CD8-positive, alpha-beta memory T cell (primary cell): ENCODE measurements at regions of chr10 and their contacts with region 1.

Region 1: GRCh38 chr10:86693721-86694369 is 25.5 kb downstream of the LDB3 start:
- DNase-seq: peak in 3 of 5 donors; percentile 10 to 58 (median 18)
- H3K4me3 ChIP-seq: no peak overlapping the region
- H3K4me3 Mint-ChIP-seq: no peak overlapping the region
- H3K27ac ChIP-seq: no peak overlapping the region
- H3K27ac Mint-ChIP-seq: no peak overlapping the region
- H3K4me1 ChIP-seq: no peaks in the 10 kb centered on the region
- H3K4me1 Mint-ChIP-seq: peaks cover under 1 to 3% (median 1%) of the 10 kb centered on the region in 3 donors
- H3K27me3 ChIP-seq: no peaks in the 10 kb centered on the region
- H3K27me3 Mint-ChIP-seq: peaks cover 0 to 2% of the 10 kb centered on the region in 2 donors

Region 2: GRCh38 chr10:86899670-86900276 is 205.9 kb after region 1 on chr10:
- CTCF ChIA-PET with region 1: interaction called, 11 read pairs
- POLR2A ChIA-PET with region 1: no interaction called
- DNase-seq: peak in 4 of 5 donors; percentile 3 to 51 (median 12)
- H3K4me3 ChIP-seq: no peak overlapping the region
- H3K4me3 Mint-ChIP-seq: no peak overlapping the region
- H3K27ac ChIP-seq: no peak overlapping the region
- H3K27ac Mint-ChIP-seq: no peak overlapping the region
- H3K4me1 ChIP-seq: no peaks in the 10 kb centered on the region
- H3K4me1 Mint-ChIP-seq: no peaks in the 10 kb centered on the region
- H3K27me3 ChIP-seq: no peaks in the 10 kb centered on the region
- H3K27me3 Mint-ChIP-seq: no peaks in the 10 kb centered on the region

Region 3: DNA sequence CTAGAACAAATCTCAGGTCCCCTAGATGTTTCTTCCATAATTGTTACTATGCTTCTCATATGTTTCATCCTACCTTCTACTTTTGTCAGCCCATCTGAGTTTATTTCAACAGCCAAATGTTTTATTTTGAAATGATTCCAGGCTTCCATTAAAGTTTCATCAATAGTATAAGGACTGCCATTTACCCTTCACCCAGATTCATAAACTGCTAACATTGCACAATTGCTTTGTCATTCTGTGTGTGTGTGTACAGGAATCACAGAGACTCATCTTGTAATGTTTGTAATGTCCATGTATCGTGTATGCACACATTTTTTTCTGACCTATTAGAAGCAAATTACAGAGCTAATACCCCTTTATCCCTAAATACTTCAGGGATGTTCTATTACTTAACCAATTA is 238.0 kb after region 1 on chr10:
- CTCF ChIA-PET with region 1: no interaction called
- POLR2A ChIA-PET with region 1: no interaction called
- DNase-seq: no peak
- H3K4me3 ChIP-seq: no peak overlapping the region
- H3K4me3 Mint-ChIP-seq: no peak overlapping the region
- H3K27ac ChIP-seq: no peak overlapping the region
- H3K27ac Mint-ChIP-seq: peak overlapping the region in 1 of 8 donors; percentile 21
- H3K4me1 ChIP-seq: no peaks in the 10 kb centered on the region
- H3K4me1 Mint-ChIP-seq: no peaks in the 10 kb centered on the region
- H3K27me3 ChIP-seq: no peaks in the 10 kb centered on the region
- H3K27me3 Mint-ChIP-seq: no peaks in the 10 kb centered on the region